A673 (cell line): ENCODE measurements at regions of chr22 and their contacts with region 1.

Region 1: GRCh38 chr22:21816787-21817496 is 50.5 kb downstream of the MAPK1 start:
- DNase-seq: peak; percentile 97
- H3K4me3 ChIP-seq: peak overlapping the region; percentile 15
- H3K27ac ChIP-seq: peak overlapping the region; percentile 69
- H3K4me1 ChIP-seq: peaks cover 35% of the 10 kb centered on the region
- H3K27me3 ChIP-seq: no peaks in the 10 kb centered on the region
- CTCF ChIP-seq: no peak

Region 2: GRCh38 chr22:21867528-21868266 is 50.8 kb after region 1 on chr22 and contains the start of gene MAPK1:
- CTCF ChIA-PET with region 1: no interaction called
- POLR2A ChIA-PET with region 1: no interaction called
- intact Hi-C with region 1: loop called (anchors 5 kb)
- DNase-seq: peak; percentile 94
- H3K4me3 ChIP-seq: peak within 1 kb of the TSS; percentile 85
- H3K27ac ChIP-seq: peak within 1 kb of the TSS; percentile 78
- H3K4me1 ChIP-seq: peaks cover 20% of the 10 kb centered on the region
- H3K27me3 ChIP-seq: no peaks in the 10 kb centered on the region
- CTCF ChIP-seq: peak; percentile 46
- total RNA-seq, gene MAPK1: 136 and 139 TPM in 2 replicates